Activated T-helper 1 cell treated with anti-CD3 and anti-CD28 coated beads, Interleukin-12 subunit alpha, Interleukin-12 subunit beta, Interleukin-2, Interleukin-4 antibody, amounts not matched to agents 30 ng/mL and 10 ng/mL and 1 ng/mL, durations not matched to agents 14 hours and 24 hours and 36 hours (primary cell): ENCODE measurements at regions of chr11 and their contacts with region 1.

Region 1: GRCh38 chr11:117970400-117971024 is 15.7 kb upstream of the IL10RA start:
- DNase-seq: peak; percentile 43
- H3K4me3 Mint-ChIP-seq: peak overlapping the region; percentile 57
- H3K27ac Mint-ChIP-seq: peak overlapping the region; percentile 83
- H3K4me1 Mint-ChIP-seq: peaks cover 66% of the 10 kb centered on the region
- H3K27me3 Mint-ChIP-seq: no peaks in the 10 kb centered on the region

Region 2: GRCh38 chr11:118002541-118003423 is 32.3 kb after region 1 on chr11:
- intact Hi-C with region 1: loop called (anchors 1 kb)
- DNase-seq: peak; percentile 50
- H3K4me3 Mint-ChIP-seq: peak overlapping the region; percentile 61
- H3K27ac Mint-ChIP-seq: peak overlapping the region; percentile 98
- H3K4me1 Mint-ChIP-seq: peaks cover 92% of the 10 kb centered on the region
- H3K27me3 Mint-ChIP-seq: no peaks in the 10 kb centered on the region

Region 3: GRCh38 chr11:118088477-118088920 is 118.0 kb after region 1 on chr11:
- intact Hi-C with region 1: no loop called
- DNase-seq: no peak
- H3K4me3 Mint-ChIP-seq: no peak overlapping the region
- H3K27ac Mint-ChIP-seq: no peak overlapping the region
- H3K4me1 Mint-ChIP-seq: no peaks in the 10 kb centered on the region
- H3K27me3 Mint-ChIP-seq: peaks cover 2% of the 10 kb centered on the region